ENCODE measurements at regions of chr15 and their contacts with region 1.

Region 1: GRCh38 chr15:76057332-76058000 is 2.3 kb upstream of the TMEM266 start:
- H3K4me3 Mint-ChIP-seq: peak overlapping the region; percentile 34
- H3K27ac Mint-ChIP-seq: no peak overlapping the region
- H3K4me1 Mint-ChIP-seq: peaks cover 24% of the 10 kb centered on the region
- H3K27me3 Mint-ChIP-seq: peaks cover 31% of the 10 kb centered on the region

Region 2: GRCh38 chr15:76139368-76140073 is 82.1 kb after region 1 on chr15:
- intact Hi-C with region 1: loop called (anchors 1 kb)
- H3K4me3 Mint-ChIP-seq: no peak overlapping the region
- H3K27ac Mint-ChIP-seq: no peak overlapping the region
- H3K4me1 Mint-ChIP-seq: peaks cover 15% of the 10 kb centered on the region
- H3K27me3 Mint-ChIP-seq: peaks cover 7% of the 10 kb centered on the region

Measured in dendritic cell treated with granulocyte-macrophage colony-stimulating factor and Interleukin-4, amounts not matched to agents 40 ng/mL and 50 ng/mL, for 4 days (primary cell).